Dorsolateral prefrontal cortex (tissue), 120 donors: ENCODE measurements at regions of chr4 and their contacts with region 1.

Region 1: DNA sequence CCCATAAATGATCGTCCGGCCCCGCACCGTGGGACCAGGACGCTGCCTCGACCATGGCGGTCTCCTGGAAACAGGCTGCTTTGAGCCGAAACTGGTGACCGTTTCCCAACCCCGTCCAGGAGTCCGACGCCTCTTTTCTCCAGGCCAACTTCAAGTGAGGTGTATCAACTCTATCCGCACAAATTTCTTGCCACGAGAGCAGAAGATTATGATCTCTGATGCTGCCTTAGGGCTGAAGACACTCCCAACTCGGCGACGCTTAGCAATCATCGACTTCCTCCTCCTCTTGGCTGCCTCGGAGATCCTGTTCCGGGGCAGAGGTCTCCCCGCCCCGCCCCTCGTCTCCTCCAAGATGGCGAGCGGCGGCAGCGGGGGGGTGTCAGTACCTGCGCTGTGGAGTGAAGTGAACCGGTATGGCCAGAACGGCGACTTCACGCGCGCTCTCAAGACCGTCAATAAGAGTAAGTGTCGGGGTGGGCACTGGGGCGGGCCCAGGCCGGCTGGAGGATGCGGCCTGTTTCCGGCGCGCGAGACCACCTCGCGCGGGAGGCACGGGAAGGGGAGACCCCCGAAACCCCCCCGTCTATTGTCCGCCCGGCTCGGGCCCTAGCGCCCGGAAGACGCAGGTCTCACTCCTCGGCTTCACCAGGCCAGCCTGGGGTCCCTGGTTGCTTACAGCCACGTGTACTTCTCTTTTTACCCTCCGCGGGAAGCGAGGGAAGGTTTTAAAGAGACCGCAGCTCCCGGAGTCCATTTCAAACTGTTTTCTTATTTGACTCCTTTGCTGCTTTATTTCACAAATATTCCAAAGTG is at the start of gene SRP72:
- DNase-seq: peak; percentile 82 to 92 (median 89)
- H3K4me3 ChIP-seq: peak within 1 kb of the TSS; percentile 63 to 99 (median 95)
- H3K27ac ChIP-seq: peak within 1 kb of the TSS in 57 of 59 donors; percentile 14 to 90 (median 80)
- H3K27me3 ChIP-seq: no peaks in the 10 kb centered on the region
- CTCF ChIP-seq: peak in 20 of 56 donors; percentile 8 to 50 (median 21)
- total RNA-seq, gene SRP72: 47.9 to 110 (median 81.9) TPM

Region 2: GRCh38 chr4:56330691-56331090 is 136.8 kb before region 1 on chr4:
- intact Hi-C with region 1: no loop called
- DNase-seq: no peak
- H3K4me3 ChIP-seq: no peak overlapping the region
- H3K27ac ChIP-seq: no peak overlapping the region
- H3K27me3 ChIP-seq: no peaks in the 10 kb centered on the region
- CTCF ChIP-seq: no peak

Region 3: GRCh38 chr4:56530269-56531148 is 63.0 kb after region 1 on chr4:
- intact Hi-C with region 1: loop called in 1 of 2 experiments (anchors 5 kb)
- DNase-seq: peak; percentile 69 to 88 (median 80)
- H3K4me3 ChIP-seq: peak overlapping the region; percentile 43 to 82 (median 67)
- H3K27ac ChIP-seq: peak overlapping the region in 14 of 59 donors; percentile 18 to 78 (median 60)
- H3K27me3 ChIP-seq: peaks cover 0 to 11% (median 0%) of the 10 kb centered on the region in 45 donors
- CTCF ChIP-seq: peak in 1 of 56 donors; percentile 11